ENCODE measurements at regions of chr13 and their contacts with region 1.

Region 1: GRCh38 chr13:98528663-98529570 is 48.0 kb downstream of the STK24 start:
- DNase-seq: peak; percentile 56
- H3K4me3 Mint-ChIP-seq: peak overlapping the region; percentile 62
- H3K27ac Mint-ChIP-seq: peak overlapping the region; percentile 89
- H3K4me1 Mint-ChIP-seq: peaks cover 95% of the 10 kb centered on the region
- H3K27me3 Mint-ChIP-seq: no peaks in the 10 kb centered on the region

Region 2: DNA sequence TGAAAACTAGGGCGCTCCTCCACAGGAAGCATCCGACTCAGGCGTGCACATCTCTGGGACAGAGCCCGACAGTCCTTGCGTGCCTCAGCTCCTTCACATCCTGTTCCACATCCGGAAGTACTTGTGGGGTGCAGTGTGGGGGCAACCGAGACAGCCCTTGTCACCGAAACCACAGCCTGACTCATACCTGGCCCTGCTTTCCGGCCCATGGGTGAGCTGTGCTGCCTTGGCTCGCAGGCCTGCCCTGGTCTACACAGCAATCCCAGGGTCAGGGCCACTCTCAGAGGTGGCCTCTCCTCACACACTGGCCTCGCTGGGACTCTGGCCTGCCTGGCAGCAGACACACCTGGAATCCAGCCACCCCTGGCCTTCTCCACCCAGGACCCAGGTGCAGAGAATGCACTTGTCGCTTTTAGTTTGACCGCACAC is 52.4 kb before region 1 on chr13:
- CTCF ChIA-PET with region 1: interaction called, 3 read pairs
- POLR2A ChIA-PET with region 1: interaction called, 5 read pairs
- intact Hi-C with region 1: loop called (anchors 1 kb)
- DNase-seq: peak; percentile 96
- H3K4me3 Mint-ChIP-seq: peak overlapping the region; percentile 62
- H3K27ac Mint-ChIP-seq: peak overlapping the region; percentile 91
- H3K4me1 Mint-ChIP-seq: peaks cover 62% of the 10 kb centered on the region
- H3K27me3 Mint-ChIP-seq: no peaks in the 10 kb centered on the region

Region 3: DNA sequence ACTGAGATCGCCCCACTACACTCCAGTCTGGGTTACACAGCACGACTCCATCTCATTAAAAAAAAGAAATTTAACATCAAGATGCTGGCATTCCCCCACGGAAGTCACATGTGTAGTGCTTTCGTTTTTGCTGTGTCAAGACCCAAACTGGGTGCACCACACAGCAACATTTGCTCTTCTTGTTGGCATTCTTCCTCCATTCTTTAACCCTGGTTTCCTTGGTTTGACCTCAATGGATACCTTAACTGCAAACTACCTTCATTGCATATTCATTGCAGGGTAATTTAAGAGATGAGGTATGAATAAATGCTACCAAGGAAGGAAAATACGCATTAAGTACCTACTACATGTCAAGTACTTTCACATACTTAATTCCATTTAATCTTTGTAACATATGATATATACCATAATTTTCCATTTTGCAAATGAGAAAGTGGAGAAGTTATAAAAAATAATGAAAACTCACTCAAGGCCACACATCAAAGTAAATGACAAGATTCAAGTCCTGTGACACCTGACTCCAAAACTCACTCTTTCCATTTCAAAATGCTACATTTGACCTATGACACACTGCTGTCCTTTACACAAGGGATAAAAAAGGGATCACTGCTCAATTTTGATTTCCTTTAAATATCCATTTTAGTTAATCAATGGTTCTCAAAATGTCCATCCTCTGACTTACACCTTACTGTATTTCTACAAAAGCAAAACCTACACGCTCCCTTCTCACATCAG is 11.2 kb before region 1 on chr13:
- CTCF ChIA-PET with region 1: interaction called, 4 read pairs
- POLR2A ChIA-PET with region 1: interaction called, 30 read pairs
- intact Hi-C with region 1: loop called (anchors 1 kb)
- DNase-seq: peak; percentile 75
- H3K4me3 Mint-ChIP-seq: peak overlapping the region; percentile 53
- H3K27ac Mint-ChIP-seq: peak overlapping the region; percentile 93
- H3K4me1 Mint-ChIP-seq: peaks cover 98% of the 10 kb centered on the region
- H3K27me3 Mint-ChIP-seq: no peaks in the 10 kb centered on the region

Region 4: GRCh38 chr13:98549006-98549727 is 20.2 kb after region 1 on chr13:
- CTCF ChIA-PET with region 1: interaction called, 4 read pairs
- POLR2A ChIA-PET with region 1: interaction called, 18 read pairs
- intact Hi-C with region 1: loop called (anchors 1 kb)
- DNase-seq: no peak
- H3K4me3 Mint-ChIP-seq: no peak overlapping the region
- H3K27ac Mint-ChIP-seq: peak overlapping the region; percentile 79
- H3K4me1 Mint-ChIP-seq: peaks cover 84% of the 10 kb centered on the region
- H3K27me3 Mint-ChIP-seq: no peaks in the 10 kb centered on the region

Region 5: GRCh38 chr13:98570929-98571372 is 42.0 kb after region 1 on chr13:
- CTCF ChIA-PET with region 1: interaction called, 4 read pairs
- POLR2A ChIA-PET with region 1: interaction called, 14 read pairs
- intact Hi-C with region 1: loop called (anchors 1 kb)
- DNase-seq: peak; percentile 67
- H3K4me3 Mint-ChIP-seq: peak overlapping the region; percentile 75
- H3K27ac Mint-ChIP-seq: peak overlapping the region; percentile 98
- H3K4me1 Mint-ChIP-seq: peaks cover 89% of the 10 kb centered on the region
- H3K27me3 Mint-ChIP-seq: no peaks in the 10 kb centered on the region